ENCODE measurements at regions of chr6 and their contacts with region 1.

Region 1: DNA sequence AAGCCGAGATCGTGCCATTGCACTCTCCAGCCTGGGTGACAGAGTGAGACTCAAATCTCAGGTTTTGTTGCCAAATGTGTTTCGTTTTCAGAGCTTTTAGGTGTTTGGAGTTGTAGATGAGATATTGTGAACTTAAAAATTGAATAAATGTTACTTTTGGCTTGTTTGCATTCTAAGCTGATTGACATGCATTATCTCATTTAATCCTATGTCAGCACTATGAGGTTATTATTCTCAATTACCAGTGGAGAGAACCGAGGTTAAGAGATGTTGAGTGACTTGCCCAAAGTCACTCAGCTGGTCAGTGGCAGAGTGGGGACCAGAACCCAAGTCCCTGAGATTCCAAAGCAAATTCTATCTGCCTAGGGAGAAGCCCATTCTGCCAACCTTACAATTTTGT is 72.6 kb upstream of the PIM1 start:
- DNase-seq: no peak
- ATAC-seq: no peak

Region 2: DNA sequence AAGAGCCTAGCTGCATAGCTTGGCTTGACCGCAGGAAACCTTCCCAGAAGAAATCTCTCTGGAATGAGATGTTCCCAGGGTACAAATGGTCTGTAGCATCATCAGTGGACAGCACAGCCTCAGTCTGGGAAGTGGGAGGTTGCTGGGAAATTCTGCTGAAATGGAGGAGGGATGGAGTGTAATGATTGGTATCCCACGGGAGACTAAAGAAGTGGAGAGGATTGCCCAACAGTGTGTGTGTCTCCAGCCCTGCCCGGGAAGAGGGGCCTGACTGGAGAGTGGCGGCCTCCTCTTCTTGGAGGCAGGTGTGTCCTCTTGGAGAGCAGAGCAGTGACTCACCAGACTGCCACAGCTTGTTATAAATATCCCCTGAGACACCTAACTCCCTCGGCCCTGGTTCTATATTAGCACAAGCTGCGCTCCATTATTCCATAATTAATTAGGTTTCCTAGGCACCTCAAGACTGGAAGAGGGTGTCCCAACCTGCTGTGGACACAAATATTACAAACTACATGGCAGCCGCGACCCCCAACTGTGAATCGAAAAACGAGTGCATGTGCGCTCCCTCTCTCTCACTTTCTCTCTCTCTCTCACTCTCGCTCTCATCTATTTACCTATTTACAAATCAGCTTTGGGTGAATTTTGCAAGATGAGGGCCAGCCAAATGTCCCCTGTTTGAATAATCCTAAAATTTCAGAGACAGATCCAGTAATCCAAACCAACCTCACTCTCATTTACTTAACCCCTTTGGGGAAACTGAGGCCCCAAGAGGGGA is 23.1 kb before region 1 on chr6:
- intact Hi-C with region 1: loop called (anchors 1 kb)
- DNase-seq: peak; percentile 80
- ATAC-seq: peak; percentile 87

Region 3: GRCh38 chr6:37192666-37193065 is 95.3 kb after region 1 on chr6:
- intact Hi-C with region 1: no loop called
- DNase-seq: no peak
- ATAC-seq: no peak

Measured in Right ventricle myocardium inferior (tissue), 1 donor.